Mammary epithelial cell (primary cell): ENCODE measurements at regions of chr1 and their contacts with region 1.

Region 1: GRCh38 chr1:167936068-167936929 is at the start of gene DCAF6:
- DNase-seq: peak; percentile 99
- H3K4me3 ChIP-seq: peak within 1 kb of the TSS; percentile 47 to 94 (median 93)
- H3K27ac ChIP-seq: peak within 1 kb of the TSS; percentile 91
- H3K4me1 ChIP-seq: no peaks in the 10 kb centered on the region
- H3K27me3 ChIP-seq: no peaks in the 10 kb centered on the region
- CTCF ChIP-seq: no peak
- total RNA-seq, gene DCAF6: 53.1 to 76.7 TPM

Region 2: DNA sequence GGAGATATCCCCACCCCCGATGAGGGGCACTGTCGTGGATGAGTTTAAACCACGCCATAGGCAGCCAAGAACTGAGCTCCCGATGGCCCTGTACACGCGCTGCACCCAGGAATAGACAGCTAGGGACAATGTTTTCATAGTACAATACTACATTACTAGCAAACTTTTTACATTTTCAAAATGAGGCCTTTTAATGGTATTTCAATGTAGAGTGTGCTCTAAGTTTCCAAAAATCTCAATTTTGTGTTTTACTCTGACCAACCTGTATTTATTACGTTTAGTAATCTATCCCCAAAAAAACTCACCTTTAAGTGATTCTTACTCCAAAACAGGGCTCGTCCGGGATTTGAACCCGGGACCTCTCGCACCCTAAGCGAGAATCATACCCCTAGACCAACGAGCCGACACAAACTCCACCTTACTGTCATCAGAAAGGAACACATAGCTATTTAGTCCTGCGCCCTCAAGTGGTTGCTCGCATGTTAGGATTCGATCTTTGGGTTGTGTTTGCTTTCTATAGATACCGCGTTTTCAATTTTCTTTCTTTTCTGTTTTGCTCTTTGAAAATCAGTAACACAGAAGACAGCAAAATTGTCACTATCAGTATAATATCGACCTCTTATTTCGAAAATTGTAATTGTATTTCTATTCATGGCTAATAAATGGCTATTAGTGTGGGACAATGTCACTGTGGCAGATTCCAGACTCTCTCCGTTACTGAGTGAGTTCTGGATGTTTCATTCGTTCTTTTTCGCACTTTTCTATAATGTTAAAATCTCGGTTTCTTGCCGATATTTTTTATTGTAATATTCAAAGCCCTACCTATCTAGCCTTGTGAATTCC is 220.9 kb before region 1 on chr1:
- CTCF ChIA-PET with region 1: no interaction called
- dilution Hi-C with region 1: no loop called
- in situ Hi-C with region 1: loop called in 1 of 2 experiments (anchors 25 kb)
- intact Hi-C with region 1: loop called (anchors 1 kb)
- DNase-seq: peak; percentile 83
- H3K4me3 ChIP-seq: peak overlapping the region; percentile 79 to 85 (median 84)
- H3K27ac ChIP-seq: peak overlapping the region; percentile 89
- H3K4me1 ChIP-seq: peaks cover 13% of the 10 kb centered on the region
- H3K27me3 ChIP-seq: no peaks in the 10 kb centered on the region
- CTCF ChIP-seq: peak; percentile 88 to 99

Region 3: DNA sequence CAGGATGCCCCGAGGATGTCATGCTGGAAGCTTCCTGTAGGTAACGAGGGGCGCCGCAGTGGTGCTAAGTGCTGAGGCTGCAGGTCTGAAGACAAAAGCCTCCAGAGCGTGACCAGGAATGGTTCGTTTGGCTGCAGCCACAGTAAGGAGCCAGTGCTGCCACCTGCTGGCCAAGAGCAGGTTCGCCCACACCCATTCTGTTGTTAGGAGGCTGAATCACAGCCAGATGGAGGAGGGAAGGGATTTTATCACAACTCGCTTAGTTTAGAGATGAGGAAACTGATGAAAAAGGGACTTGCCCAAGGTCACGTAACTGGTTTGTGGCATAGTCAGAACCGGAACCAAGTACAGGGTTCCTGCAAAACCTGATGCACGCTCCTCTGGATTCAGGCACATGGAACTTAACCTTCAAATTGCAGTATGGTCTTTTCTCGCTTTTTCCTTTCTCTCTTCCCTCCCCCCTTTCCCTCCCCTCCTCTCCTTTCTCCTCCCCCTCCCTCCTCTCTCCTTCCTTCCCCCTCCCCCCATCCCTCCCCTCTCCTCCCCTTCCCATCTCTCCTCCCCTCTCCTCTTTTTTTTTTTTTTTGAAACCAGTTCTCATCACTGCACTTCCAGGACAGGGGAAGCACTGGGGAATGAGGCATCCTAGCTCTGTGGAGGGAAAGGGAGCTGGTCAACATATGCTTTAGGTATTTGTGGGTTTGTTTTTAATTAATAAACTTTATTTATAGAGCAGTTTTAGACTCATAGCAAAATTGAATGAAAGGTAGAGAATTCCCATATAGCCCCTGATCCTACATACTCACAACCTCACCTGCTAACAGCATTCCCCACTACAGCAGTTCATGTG is 132.7 kb before region 1 on chr1:
- CTCF ChIA-PET with region 1: no interaction called
- dilution Hi-C with region 1: no loop called
- in situ Hi-C with region 1: no loop called
- intact Hi-C with region 1: loop called (anchors 1 kb)
- DNase-seq: peak; percentile 89
- H3K4me3 ChIP-seq: no peak overlapping the region
- H3K27ac ChIP-seq: no peak overlapping the region
- H3K4me1 ChIP-seq: peaks cover 25% of the 10 kb centered on the region
- H3K27me3 ChIP-seq: no peaks in the 10 kb centered on the region
- CTCF ChIP-seq: peak; percentile 98 to 99

Region 4: GRCh38 chr1:167905671-167906070 is 30.6 kb before region 1 on chr1:
- CTCF ChIA-PET with region 1: interaction called, 10 read pairs
- dilution Hi-C with region 1: no loop called
- in situ Hi-C with region 1: no loop called
- intact Hi-C with region 1: no loop called
- DNase-seq: no peak
- H3K4me3 ChIP-seq: no peak overlapping the region
- H3K27ac ChIP-seq: no peak overlapping the region
- H3K4me1 ChIP-seq: peaks cover 2% of the 10 kb centered on the region
- H3K27me3 ChIP-seq: no peaks in the 10 kb centered on the region
- CTCF ChIP-seq: no peak

Region 5: DNA sequence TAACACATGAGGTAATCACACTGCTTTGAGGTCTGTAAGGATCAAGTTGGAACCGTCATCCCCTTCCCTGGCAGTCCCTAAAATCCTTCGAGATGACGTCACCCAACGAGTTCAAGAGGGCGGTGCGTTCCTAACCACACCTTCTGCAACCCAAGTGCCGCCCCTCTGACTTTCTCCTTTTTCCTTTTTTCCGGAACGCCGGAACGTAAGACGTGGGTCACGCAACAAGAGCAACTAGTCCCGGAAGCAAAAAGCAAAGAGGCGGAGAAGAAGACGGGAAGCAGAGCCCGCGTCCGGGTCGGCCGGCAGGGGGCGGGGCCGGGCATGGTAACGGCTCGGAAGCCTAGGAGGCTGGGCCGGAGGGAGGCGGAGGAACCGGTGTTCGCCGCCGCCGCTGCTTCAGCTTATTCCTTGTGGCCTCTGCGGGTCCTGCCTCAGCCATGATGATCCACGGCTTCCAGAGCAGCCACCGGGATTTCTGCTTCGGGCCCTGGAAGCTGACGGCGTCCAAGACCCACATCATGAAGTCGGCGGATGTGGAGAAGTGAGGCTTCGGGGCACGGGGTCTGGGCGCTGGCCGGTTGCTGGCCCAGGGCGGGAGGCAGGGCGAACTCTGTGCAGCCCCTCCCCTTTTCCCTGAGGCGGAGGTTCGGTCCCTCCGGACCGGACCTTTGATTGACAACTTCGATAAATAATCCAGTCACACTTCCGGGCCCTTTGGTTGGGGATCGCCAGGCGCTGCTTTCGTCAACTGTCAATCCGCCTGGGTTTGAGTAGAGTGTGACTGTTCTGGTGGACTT is 242.5 kb after region 1 on chr1 and contains the start of gene TIPRL:
- CTCF ChIA-PET with region 1: no interaction called
- dilution Hi-C with region 1: no loop called
- in situ Hi-C with region 1: no loop called
- intact Hi-C with region 1: loop called (anchors 2 kb)
- DNase-seq: peak; percentile 99
- H3K4me3 ChIP-seq: peak within 1 kb of the TSS; percentile 78 to 94 (median 88)
- H3K27ac ChIP-seq: peak within 1 kb of the TSS; percentile 78
- H3K4me1 ChIP-seq: peaks cover 15% of the 10 kb centered on the region
- H3K27me3 ChIP-seq: no peaks in the 10 kb centered on the region
- CTCF ChIP-seq: peak; percentile 39 to 69
- total RNA-seq, gene TIPRL: 32.5 to 46.0 TPM